ENCODE measurements at regions of chr1 and their contacts with region 1.

Region 1: DNA sequence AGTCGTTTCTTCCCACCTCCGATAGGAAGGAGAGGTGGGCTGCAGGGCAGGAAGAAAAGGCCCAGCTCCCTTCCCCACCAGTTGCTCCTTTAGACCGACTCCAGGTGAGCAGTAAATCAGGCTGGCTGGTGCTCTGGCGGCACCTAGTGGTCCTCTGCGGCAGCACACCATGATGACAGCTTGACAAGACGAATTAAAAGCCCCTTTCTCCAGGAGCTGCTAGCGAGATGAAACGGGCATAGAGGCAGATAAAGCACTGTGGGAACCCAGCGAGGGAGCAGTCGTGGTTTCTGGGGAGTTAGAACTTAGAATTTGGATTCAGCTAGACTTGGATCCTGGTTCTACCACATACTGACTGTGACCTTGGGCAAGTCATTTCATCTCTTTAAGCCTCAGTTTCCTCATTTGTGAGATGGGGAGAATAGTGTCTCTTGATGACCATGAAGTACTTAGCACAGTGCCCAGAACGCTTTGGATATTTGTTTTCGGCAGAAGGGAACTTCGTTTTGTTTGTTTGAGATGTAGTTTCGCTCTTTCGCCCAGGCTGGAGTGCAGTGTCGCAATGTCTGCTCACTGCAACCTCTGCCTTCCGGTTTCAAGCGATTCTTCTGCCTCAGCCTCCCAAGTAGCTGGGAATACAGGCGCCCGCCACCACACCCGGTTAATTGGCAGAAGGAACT is 21.8 kb upstream of the COL9A2 start:
- H3K4me3 ChIP-seq: no peak overlapping the region
- H3K27ac ChIP-seq: no peak overlapping the region
- H3K4me1 ChIP-seq: no peaks in the 10 kb centered on the region
- CTCF ChIP-seq: peak; percentile 91

Region 2: DNA sequence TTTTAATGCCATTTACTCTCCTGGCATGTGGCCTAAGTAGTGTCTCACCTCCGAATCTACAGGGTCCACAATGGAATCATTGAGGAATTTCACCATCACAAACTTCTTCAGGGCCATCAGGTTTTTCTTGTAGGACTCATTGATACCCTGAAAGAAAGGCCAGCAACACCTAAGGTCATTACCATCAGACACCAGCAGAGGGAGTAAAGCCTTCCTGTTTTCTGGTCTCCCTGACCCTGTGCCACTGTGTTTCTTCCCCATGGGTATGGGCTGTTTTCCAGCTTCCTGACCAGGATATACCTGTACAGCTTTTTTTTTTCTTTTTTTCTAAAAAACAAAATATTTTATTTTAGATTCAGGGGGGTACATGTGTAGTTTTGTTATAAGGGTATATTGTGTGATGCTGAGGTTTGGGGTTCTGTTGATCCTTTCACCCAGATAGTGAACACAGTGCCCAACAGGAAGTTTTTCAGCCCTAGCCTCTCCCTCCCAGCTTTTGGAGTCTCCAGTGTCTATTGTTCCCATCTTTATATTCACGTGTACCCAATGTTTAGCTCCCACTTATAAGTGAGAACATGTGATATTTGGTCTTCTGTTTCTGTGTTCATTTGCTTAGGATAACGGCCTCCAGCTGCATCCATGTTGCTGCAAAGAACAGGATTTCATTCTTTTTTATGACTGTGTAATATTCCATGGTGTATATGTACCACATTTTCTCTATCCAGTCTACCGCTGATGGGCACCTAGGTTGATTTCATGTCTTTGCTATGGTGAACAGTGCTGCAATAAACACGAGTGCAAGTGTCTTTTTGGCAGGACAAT is 260.2 kb before region 1 on chr1:
- CTCF ChIA-PET with region 1: interaction called, 42 read pairs
- POLR2A ChIA-PET with region 1: no interaction called
- H3K4me3 ChIP-seq: no peak overlapping the region
- H3K27ac ChIP-seq: no peak overlapping the region
- H3K4me1 ChIP-seq: no peaks in the 10 kb centered on the region
- CTCF ChIP-seq: peak; percentile 17; the same call in 1 of the 2 replicates

Region 3: GRCh38 chr1:40232444-40232843 is 106.4 kb before region 1 on chr1:
- CTCF ChIA-PET with region 1: no interaction called
- POLR2A ChIA-PET with region 1: no interaction called
- H3K4me3 ChIP-seq: no peak overlapping the region
- H3K27ac ChIP-seq: no peak overlapping the region
- H3K4me1 ChIP-seq: no peaks in the 10 kb centered on the region
- CTCF ChIP-seq: no peak

Region 4: DNA sequence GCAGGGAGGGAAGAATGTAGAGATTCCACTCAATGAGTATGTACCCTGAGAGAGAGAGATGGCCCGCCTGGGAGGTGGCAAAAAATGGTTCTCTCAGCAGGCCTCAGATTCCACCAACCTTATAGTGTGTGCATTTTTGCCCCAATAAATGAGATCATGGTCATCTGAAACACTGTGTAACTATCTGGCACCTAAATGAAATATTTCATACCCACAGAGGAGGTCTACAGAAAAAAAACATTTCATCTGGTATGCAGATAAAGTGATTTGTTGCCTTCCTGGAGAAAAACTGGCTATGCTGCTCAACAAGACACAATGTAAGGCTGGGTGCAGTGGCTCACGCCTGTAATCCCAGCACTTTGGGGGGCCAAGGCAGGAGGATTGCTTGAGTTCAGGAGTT is 86.3 kb before region 1 on chr1:
- CTCF ChIA-PET with region 1: no interaction called
- POLR2A ChIA-PET with region 1: no interaction called
- H3K4me3 ChIP-seq: no peak overlapping the region
- H3K27ac ChIP-seq: no peak overlapping the region
- H3K4me1 ChIP-seq: no peaks in the 10 kb centered on the region
- CTCF ChIP-seq: no peak

Region 5: GRCh38 chr1:40281853-40282252 is 57.0 kb before region 1 on chr1:
- CTCF ChIA-PET with region 1: interaction called, 11 read pairs
- POLR2A ChIA-PET with region 1: no interaction called
- H3K4me3 ChIP-seq: no peak overlapping the region
- H3K27ac ChIP-seq: no peak overlapping the region
- H3K4me1 ChIP-seq: no peaks in the 10 kb centered on the region
- CTCF ChIP-seq: no peak

Region 6: DNA sequence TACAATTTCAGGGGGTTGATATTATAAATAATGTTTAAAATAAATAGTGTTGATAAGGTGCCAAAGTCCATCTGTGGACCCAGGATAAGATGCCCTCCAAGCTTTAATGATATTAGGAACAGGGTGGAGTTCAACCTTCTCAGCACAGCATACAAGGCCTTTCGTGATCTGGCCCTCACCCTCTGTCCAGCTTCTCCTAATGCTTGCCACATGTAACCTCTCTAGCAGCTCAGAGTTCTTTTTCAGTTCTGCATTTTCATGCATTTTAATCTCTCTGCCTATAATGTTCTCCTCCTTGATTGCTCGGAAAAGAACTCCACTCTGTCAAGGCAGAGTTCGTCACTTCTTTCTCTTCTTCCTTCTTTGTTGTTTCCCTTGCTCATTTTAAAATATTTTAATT is 13.2 kb after region 1 on chr1:
- CTCF ChIA-PET with region 1: interaction called, 26 read pairs
- POLR2A ChIA-PET with region 1: interaction called, 5 read pairs
- H3K4me3 ChIP-seq: no peak overlapping the region
- H3K27ac ChIP-seq: no peak overlapping the region
- H3K4me1 ChIP-seq: no peaks in the 10 kb centered on the region
- CTCF ChIP-seq: no peak

Region 7: DNA sequence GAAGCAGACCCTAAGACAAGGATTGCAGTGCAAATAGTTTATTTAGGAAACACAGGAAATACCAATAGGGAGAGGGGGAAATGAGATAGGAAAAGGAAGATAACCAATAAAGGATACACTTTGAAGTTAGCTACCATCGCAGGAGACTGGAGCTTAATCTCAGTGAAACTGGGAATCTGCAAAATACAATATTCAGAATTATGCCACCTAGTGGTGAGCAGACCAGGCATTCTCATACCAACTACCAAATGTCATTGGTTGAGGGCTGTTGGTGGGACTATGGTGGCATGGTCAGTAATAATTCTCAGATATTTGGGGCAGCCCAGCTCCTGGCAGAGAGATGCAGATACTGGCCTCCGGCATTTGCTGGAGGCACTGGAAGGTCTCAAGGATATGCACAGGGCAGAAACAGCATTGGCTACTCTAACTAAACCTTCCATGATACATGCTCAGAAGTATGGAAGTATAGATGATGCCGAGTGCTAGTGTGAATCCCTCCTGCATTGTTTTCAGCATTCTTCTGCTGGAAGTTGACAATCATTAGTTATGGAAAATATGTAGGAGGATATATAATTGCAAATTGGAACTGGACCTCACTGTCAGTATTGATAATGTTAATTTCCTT is 99.6 kb after region 1 on chr1:
- CTCF ChIA-PET with region 1: interaction called, 10 read pairs
- POLR2A ChIA-PET with region 1: no interaction called
- H3K4me3 ChIP-seq: no peak overlapping the region
- H3K27ac ChIP-seq: no peak overlapping the region
- H3K4me1 ChIP-seq: no peaks in the 10 kb centered on the region
- CTCF ChIP-seq: no peak

Measured in HEK293 (cell line).